ENCODE measurements at regions of chr4 and their contacts with region 1.

Region 1: DNA sequence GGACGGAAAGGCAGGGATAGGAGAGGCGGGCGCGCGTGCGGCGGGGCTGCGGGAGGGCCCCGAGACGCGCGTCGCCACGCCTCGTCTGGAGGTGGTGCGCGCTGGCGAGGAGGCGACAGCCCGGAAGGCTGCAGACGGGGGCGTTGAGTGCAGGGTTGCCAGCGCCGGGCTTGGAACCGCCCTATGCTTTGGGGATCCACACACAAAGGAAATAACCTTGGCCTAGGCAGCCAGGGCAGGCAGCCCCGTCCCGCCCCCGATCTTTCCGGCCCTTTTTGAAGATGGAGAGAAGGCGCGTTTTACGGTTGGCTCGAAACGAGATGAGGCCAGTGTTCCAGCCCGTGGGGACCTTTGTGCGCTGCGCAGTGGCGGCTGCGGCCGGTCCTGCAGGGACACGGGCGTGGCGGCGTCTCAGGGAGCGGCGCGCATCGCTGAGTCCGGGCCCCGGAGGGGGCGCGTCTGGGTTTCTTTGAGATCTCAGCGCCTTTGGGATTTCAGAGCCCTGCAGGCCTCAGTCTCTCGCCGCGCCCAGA is 50.8 kb upstream of the TRIM2 start:
- DNase-seq: peak; percentile 52 to 95 (median 62)

Region 2: DNA sequence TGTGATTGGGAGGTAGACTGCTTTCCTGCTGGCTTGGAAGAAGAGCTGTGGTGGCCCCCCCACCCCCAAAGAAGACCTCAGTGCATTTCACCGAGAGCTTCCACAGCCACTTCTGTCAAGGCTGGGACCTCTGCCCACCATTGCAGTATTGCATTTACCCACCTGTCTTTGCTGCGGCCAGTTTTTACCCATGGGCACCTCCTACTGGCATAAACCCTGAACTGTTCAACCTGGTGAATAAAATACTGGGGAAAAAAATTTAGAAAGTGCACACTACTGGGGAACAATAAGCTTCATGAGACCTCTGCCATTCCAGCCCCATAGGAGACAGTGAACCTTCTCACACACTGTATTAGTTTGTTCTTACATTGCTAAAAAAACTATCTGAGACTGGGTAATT is 333.3 kb before region 1 on chr4:
- intact Hi-C with region 1: no loop called
- DNase-seq: no peak

Region 3: DNA sequence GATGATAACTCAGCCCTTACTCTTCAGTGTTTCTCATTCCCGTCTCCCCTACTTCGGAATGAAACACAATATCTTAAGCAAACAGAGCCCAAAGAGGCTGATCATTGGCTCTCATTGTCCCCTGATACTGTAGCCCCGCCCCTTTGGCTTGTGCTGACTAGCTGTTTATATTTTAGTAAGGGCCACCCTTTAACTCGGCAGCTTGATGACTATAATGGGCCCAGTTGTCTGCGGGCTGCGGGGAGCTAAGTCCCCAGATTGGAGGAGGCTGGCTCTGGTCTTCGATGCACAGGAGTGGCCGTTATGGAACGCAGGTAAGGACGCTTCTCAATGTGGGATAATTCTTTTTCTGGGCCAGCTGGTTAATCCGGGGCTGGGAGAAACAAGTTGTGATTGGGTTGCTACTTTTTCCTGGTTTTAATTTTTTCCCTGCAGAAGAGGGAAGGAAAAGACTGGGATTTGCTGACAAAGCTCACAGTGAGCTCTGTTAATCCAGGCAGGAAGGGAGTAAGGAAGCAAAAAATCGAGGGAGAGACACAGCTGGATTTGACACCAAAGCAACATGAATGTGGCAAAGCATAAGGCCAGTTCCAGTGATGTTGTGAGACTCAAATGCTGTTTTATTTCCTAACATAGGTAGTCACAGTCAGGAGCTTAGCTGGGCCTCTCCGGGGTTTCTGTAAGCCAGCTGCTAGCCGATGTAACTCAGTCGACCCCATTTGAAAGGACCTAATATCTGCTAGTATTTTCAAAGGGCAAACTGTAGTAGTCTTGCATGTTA is 51.0 kb after region 1 on chr4 and contains the start of gene TRIM2:
- intact Hi-C with region 1: loop called (anchors 5 kb)
- DNase-seq: peak in 9 of 10 donors; percentile 49 to 95 (median 77)

Region 4: DNA sequence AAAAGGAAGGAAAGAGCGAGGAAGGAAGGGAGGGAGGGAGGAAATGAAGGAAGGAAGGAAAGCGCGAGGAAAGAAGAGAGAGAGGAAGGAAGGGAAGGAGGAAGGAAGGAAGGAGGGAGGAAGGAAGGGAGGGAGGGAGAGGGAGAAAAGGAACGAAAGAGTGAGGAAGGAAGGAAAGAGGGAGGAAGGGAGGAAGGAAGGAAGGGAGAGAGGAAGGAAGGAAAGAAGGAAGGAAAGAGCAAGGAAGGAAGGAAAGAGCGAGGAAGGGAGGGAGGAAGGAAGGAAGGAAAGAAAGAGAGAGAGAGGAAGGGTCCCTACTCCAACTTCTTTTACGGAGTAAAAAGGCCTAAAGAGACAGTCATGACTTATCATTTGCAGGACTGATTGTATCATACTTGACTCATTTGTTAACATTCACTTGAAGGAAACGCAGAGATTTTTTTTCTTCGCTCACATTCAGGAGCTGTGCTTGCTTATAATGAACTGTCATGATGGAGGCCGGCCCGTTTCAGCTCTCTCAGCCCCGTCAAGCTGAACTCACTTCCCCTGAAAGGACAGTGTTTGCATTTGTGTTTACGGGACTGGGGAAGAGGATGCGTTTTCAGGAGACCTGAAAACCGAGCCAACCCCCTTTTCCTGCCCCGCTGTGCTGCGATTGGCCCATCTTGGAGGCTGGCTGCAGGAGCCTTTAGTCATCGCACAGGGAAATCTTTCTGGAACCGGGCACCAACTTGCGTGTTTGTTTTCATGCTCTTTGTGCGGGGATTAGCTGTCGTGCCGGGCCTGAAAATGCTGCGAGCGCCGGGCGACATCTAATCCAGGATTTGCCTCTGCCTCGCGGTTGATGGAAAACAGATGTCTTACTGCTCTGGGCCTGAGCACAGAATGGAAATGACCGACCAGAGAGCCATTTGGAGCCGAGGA is 68.6 kb after region 1 on chr4:
- intact Hi-C with region 1: loop called (anchors 5 kb)
- DNase-seq: peak; percentile 46 to 94 (median 64)

Region 5: GRCh38 chr4:153257151-153257620 is 103.8 kb after region 1 on chr4:
- intact Hi-C with region 1: loop called (anchors 5 kb)
- DNase-seq: peak; percentile 64 to 96 (median 82)

Measured in posterior cingulate gyrus (tissue), 11 donors.